ENCODE measurements at regions of chr11 and their contacts with region 1.

Region 1: DNA sequence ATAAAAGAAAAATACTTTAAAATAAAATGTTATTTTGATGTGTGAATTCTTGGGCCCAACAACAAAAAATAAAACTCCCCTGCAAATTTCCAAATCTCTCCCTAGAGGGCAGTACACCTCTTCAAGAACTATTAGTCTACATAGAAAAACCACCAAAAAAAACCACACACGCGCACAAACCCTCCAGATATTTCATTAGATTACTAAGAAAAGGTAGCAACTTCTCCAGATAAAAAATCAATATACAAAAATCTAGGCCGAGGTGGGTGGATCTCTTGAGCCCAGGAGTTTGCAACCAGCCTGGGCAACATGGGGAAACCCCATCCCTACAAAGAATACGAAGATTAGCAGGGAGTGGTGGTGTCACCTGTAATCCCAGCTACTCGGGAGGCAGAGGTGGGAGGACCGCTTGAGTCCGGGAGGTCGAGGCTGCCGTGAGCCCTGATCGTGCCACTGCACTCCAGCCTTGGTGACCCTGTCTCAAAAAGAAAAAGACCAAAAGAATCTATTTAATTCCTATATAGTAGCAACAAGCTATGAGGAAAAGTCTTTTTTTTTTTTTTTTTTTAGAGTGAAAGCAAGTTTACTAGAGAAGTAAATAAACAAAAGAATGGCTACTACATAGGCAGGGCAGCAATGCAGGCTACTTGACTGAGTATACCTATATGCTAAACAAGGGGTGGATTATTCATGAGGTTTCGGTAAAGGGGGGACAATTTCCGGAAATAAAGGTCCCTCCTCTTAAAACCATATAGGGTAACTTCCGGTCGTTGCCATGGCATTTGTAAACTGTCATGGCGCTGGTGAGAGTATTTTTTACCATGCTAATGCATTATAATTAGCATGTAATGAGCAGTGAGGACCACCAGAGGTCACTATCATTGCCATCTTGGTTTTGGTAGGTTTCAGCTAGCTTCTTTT is 13.1 kb downstream of the B3GNT6 start:
- DNase-seq: peak in 8 of 9 donors; percentile 51 to 94 (median 92)
- ATAC-seq: peak; percentile 89
- H3K4me3 ChIP-seq: peak overlapping the region; percentile 70
- H3K4me3 Mint-ChIP-seq: peak overlapping the region; percentile 55 to 82 (median 70)
- H3K27ac ChIP-seq: peak overlapping the region; percentile 60
- H3K27ac Mint-ChIP-seq: peak overlapping the region; percentile 8 to 75 (median 58)
- H3K4me1 ChIP-seq: peaks cover 4 to 14% of the 10 kb centered on the region in 2 donors
- H3K4me1 Mint-ChIP-seq: peaks cover 6 to 17% (median 12%) of the 10 kb centered on the region in 7 donors
- H3K27me3 ChIP-seq: no peaks in the 10 kb centered on the region
- H3K27me3 Mint-ChIP-seq: peaks cover 6 to 25% (median 9%) of the 10 kb centered on the region in 5 donors

Region 2: GRCh38 chr11:75814686-75815344 is 1232.5 kb before region 1 on chr11 and contains the start of gene UVRAG:
- CTCF ChIA-PET with region 1: no interaction called
- POLR2A ChIA-PET with region 1: no interaction called
- intact Hi-C with region 1: loop called in 1 of 2 experiments (anchors 10 kb)
- DNase-seq: peak; percentile 96 to 99 (median 98)
- ATAC-seq: peak; percentile 94
- H3K4me3 ChIP-seq: peak within 1 kb of the TSS; percentile 96
- H3K4me3 Mint-ChIP-seq: peak within 1 kb of the TSS in 3 of 10 donors; percentile 93 to 99 (median 98)
- H3K27ac ChIP-seq: peak within 1 kb of the TSS; percentile 83
- H3K27ac Mint-ChIP-seq: peak within 1 kb of the TSS in 7 of 9 donors; percentile 88 to 100 (median 96)
- H3K4me1 ChIP-seq: peaks cover 14 to 26% of the 10 kb centered on the region in 2 donors
- H3K4me1 Mint-ChIP-seq: peaks cover 5 to 21% (median 20%) of the 10 kb centered on the region in 7 donors
- H3K27me3 ChIP-seq: no peaks in the 10 kb centered on the region
- H3K27me3 Mint-ChIP-seq: peaks cover 0 to 4% (median 0%) of the 10 kb centered on the region in 5 donors
- total RNA-seq, gene UVRAG: 24.0 to 46.1 (median 25.4) TPM

Region 3: GRCh38 chr11:76807206-76807875 is 239.9 kb before region 1 on chr11:
- CTCF ChIA-PET with region 1: no interaction called
- POLR2A ChIA-PET with region 1: no interaction called
- intact Hi-C with region 1: loop called in 1 of 2 experiments (anchors 2 kb)
- DNase-seq: peak; percentile 25 to 69 (median 49)
- ATAC-seq: peak; percentile 76
- H3K4me3 ChIP-seq: no peak overlapping the region
- H3K4me3 Mint-ChIP-seq: peak overlapping the region in 5 of 10 donors; percentile 9 to 48 (median 25)
- H3K27ac ChIP-seq: no peak overlapping the region
- H3K27ac Mint-ChIP-seq: peak overlapping the region in 1 of 9 donors; percentile 69
- H3K4me1 ChIP-seq: peaks cover 0 to 10% of the 10 kb centered on the region in 2 donors
- H3K4me1 Mint-ChIP-seq: peaks cover 5 to 52% (median 29%) of the 10 kb centered on the region in 7 donors
- H3K27me3 ChIP-seq: no peaks in the 10 kb centered on the region
- H3K27me3 Mint-ChIP-seq: peaks cover 6 to 35% (median 15%) of the 10 kb centered on the region in 5 donors

Region 4: DNA sequence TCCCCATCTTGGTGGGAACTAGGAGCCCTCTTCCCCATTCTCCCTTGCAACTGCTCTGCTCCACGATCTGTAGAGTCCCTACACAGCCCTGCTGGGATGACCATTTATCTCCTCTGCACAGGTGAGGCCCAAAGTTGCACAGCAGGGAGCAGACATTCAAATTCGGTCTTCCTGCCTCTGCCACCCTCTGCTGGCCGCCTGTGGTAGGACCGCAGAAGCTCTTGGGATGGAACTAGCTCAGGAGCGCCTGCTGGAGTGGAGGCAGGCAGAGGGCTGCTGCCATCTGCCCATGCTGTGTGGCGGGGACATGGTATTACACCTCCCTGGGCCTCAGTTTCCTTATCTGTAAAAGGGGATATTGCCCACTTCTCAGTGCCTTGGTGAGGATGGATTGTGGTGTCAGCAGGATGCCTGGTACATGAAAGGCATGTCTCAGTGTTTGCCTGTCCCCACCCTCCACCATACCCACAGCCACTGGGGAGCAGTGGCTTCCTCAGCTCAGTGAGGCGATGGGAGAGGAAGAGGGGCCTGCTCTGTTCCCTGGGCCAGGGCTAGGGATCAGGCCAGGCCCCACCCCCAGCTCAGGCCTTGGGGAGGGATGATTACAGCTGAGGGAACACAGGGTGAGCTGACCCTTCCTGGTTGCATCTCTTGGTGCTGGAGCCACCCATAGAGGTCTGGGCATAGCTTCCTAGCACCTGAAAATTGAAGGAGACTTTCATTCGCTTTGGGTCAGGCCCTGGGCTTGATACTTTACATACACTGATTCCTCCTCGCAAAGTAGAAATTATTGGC is 44.1 kb after region 1 on chr11:
- CTCF ChIA-PET with region 1: interaction called, 58 read pairs
- POLR2A ChIA-PET with region 1: interaction called, 8 read pairs
- intact Hi-C with region 1: loop called (anchors 1 kb)
- DNase-seq: peak; percentile 59 to 79 (median 74)
- ATAC-seq: peak; percentile 94
- H3K4me3 ChIP-seq: no peak overlapping the region
- H3K4me3 Mint-ChIP-seq: no peak overlapping the region
- H3K27ac ChIP-seq: no peak overlapping the region
- H3K27ac Mint-ChIP-seq: peak overlapping the region in 1 of 9 donors; percentile 32
- H3K4me1 ChIP-seq: no peaks in the 10 kb centered on the region
- H3K4me1 Mint-ChIP-seq: peaks cover 0 to 7% (median 4%) of the 10 kb centered on the region in 7 donors
- H3K27me3 ChIP-seq: no peaks in the 10 kb centered on the region
- H3K27me3 Mint-ChIP-seq: no peaks in the 10 kb centered on the region

Region 5: GRCh38 chr11:77473801-77474683 is 426.8 kb after region 1 on chr11 and contains the start of gene PAK1:
- CTCF ChIA-PET with region 1: interaction called, 3 read pairs
- POLR2A ChIA-PET with region 1: no interaction called
- intact Hi-C with region 1: loop called in 1 of 2 experiments (anchors 10 kb)
- DNase-seq: peak; percentile 79 to 96 (median 85)
- ATAC-seq: peak; percentile 89
- H3K4me3 ChIP-seq: peak within 1 kb of the TSS; percentile 43
- H3K4me3 Mint-ChIP-seq: peak within 1 kb of the TSS; percentile 85 to 99 (median 92)
- H3K27ac ChIP-seq: peak within 1 kb of the TSS; percentile 75
- H3K27ac Mint-ChIP-seq: peak within 1 kb of the TSS; percentile 87 to 100 (median 96)
- H3K4me1 ChIP-seq: no peaks in the 10 kb centered on the region
- H3K4me1 Mint-ChIP-seq: peaks cover 12 to 29% (median 23%) of the 10 kb centered on the region in 7 donors
- H3K27me3 ChIP-seq: no peaks in the 10 kb centered on the region
- H3K27me3 Mint-ChIP-seq: peaks cover 0 to 37% (median 0%) of the 10 kb centered on the region in 5 donors
- total RNA-seq, gene PAK1: 18.9 to 67.2 (median 23.3) TPM

Region 6: GRCh38 chr11:77820563-77821348 is 773.5 kb after region 1 on chr11 and contains the starts of genes AAMDC and RSF1:
- CTCF ChIA-PET with region 1: no interaction called
- POLR2A ChIA-PET with region 1: no interaction called
- intact Hi-C with region 1: loop called in 1 of 2 experiments (anchors 2 kb)
- DNase-seq: peak; percentile 89 to 98 (median 97)
- ATAC-seq: peak; percentile 92
- H3K4me3 ChIP-seq: peak within 1 kb of the TSS; percentile 97
- H3K4me3 Mint-ChIP-seq: peak within 1 kb of the TSS; percentile 89 to 100 (median 98)
- H3K27ac ChIP-seq: peak within 1 kb of the TSS; percentile 84
- H3K27ac Mint-ChIP-seq: peak within 1 kb of the TSS; percentile 93 to 99 (median 95)
- H3K4me1 ChIP-seq: peaks cover 28 to 30% of the 10 kb centered on the region in 2 donors
- H3K4me1 Mint-ChIP-seq: peaks cover 27 to 48% (median 42%) of the 10 kb centered on the region in 7 donors
- H3K27me3 ChIP-seq: no peaks in the 10 kb centered on the region
- H3K27me3 Mint-ChIP-seq: peaks cover 0 to 2% (median 0%) of the 10 kb centered on the region in 5 donors
- total RNA-seq, gene AAMDC: 5.2 to 9.2 (median 6.5) TPM
- total RNA-seq, gene RSF1: 59.0 to 113 (median 88.9) TPM

Measured in naive thymus-derived CD4-positive, alpha-beta T cell (primary cell).